Heart right ventricle (tissue), 16 donors: ENCODE measurements at regions of chr11 and their contacts with region 1.

Region 1: GRCh38 chr11:44634401-44635281 is 69.2 kb downstream of the CD82 start:
- DNase-seq: peak; percentile 72 to 83
- ATAC-seq: peak; percentile 67 to 89 (median 82)
- H3K4me3 ChIP-seq: peak overlapping the region in 1 of 10 donors; percentile 26
- H3K27ac ChIP-seq: peak overlapping the region in 3 of 10 donors; percentile 14 to 62 (median 45)
- H3K4me1 ChIP-seq: peaks cover 10 to 52% (median 36%) of the 10 kb centered on the region in 9 donors
- H3K27me3 ChIP-seq: no peaks in the 10 kb centered on the region
- CTCF ChIP-seq: no peak

Region 2: DNA sequence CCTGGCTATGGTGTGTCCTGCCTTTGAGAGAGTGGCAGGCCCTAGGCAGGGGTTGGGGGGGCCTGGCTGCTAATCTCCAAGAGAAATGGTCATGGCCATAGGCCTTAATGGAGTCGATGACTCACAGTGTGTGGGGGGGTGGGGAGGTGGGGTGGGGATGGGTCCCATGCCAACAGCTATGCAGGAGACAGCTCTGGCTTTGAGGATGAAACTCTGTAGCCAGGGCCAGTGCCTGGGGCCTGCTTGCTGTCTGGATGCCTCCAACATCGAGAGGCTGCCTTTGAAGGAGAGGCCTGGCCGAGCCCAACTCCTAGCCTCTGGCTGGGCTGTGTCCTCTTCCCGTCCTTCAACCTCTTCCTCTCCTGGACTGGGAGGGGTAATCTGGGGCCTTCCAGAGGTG is 68.2 kb after region 1 on chr11:
- intact Hi-C with region 1: loop called in 2 of 10 experiments (anchors 5 to 10 kb)
- DNase-seq: no peak
- ATAC-seq: peak in 5 of 8 donors; percentile 10 to 61 (median 21)
- H3K4me3 ChIP-seq: no peak overlapping the region
- H3K27ac ChIP-seq: peak overlapping the region in 5 of 10 donors; percentile 20 to 53 (median 36)
- H3K4me1 ChIP-seq: peaks cover 8 to 51% (median 25%) of the 10 kb centered on the region in 9 donors
- H3K27me3 ChIP-seq: no peaks in the 10 kb centered on the region
- CTCF ChIP-seq: no peak

Region 3: GRCh38 chr11:44709966-44710365 is 75.3 kb after region 1 on chr11:
- intact Hi-C with region 1: loop called in 2 of 10 experiments (anchors 10 kb)
- DNase-seq: no peak
- ATAC-seq: no peak
- H3K4me3 ChIP-seq: no peak overlapping the region
- H3K27ac ChIP-seq: no peak overlapping the region
- H3K4me1 ChIP-seq: peaks cover 0 to 21% (median 0%) of the 10 kb centered on the region in 9 donors
- H3K27me3 ChIP-seq: no peaks in the 10 kb centered on the region
- CTCF ChIP-seq: no peak